ENCODE measurements at regions of chr19 and their contacts with region 1.

Region 1: DNA sequence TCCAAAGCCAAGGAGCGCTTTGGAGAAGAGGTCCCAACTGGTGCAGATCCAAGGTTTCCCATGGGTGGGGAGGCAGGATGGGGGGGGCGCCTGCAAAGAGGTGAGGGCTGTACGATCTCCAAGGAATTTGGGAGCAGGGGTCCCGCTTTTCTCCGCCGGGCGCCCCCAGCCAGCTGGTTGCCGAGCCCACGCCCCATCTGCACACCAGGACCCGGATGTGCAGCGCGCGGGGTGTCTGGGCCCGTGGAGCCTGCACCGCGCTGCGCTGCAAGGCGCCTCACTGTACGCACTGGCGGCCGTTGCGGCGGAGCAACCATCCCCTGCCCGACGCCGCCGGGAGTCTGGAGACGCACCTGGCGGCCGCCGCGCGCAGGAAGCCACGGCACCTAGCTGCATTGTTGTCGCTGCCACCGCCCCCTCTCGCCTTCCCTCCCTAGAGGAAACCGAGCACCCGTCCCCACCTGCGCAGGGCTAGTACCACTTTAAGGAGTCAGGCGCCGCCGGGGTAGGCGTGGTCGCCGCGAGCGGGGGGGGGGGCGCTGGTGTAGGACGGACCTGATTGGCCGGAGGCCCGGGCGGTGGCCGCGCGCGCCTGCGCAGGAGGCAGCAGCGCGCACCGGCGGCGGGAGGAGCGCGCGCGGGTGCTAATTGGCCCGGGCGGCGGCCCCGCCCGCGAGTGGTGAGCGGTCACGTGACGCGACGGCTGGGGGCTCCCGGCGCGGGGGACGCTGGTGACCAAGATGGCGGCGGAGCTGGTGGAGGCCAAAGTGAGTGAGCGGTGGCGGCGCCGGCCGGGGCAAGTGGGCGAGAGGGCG is at the start of gene PIAS4:
- DNase-seq: peak; percentile 98
- H3K4me3 Mint-ChIP-seq: peak within 1 kb of the TSS; percentile 90
- H3K27ac Mint-ChIP-seq: peak within 1 kb of the TSS; percentile 90
- H3K4me1 Mint-ChIP-seq: peaks cover 16% of the 10 kb centered on the region
- H3K27me3 Mint-ChIP-seq: no peaks in the 10 kb centered on the region
- total RNA-seq, gene PIAS4: 32.2 and 33.2 TPM in 2 replicates

Region 2: DNA sequence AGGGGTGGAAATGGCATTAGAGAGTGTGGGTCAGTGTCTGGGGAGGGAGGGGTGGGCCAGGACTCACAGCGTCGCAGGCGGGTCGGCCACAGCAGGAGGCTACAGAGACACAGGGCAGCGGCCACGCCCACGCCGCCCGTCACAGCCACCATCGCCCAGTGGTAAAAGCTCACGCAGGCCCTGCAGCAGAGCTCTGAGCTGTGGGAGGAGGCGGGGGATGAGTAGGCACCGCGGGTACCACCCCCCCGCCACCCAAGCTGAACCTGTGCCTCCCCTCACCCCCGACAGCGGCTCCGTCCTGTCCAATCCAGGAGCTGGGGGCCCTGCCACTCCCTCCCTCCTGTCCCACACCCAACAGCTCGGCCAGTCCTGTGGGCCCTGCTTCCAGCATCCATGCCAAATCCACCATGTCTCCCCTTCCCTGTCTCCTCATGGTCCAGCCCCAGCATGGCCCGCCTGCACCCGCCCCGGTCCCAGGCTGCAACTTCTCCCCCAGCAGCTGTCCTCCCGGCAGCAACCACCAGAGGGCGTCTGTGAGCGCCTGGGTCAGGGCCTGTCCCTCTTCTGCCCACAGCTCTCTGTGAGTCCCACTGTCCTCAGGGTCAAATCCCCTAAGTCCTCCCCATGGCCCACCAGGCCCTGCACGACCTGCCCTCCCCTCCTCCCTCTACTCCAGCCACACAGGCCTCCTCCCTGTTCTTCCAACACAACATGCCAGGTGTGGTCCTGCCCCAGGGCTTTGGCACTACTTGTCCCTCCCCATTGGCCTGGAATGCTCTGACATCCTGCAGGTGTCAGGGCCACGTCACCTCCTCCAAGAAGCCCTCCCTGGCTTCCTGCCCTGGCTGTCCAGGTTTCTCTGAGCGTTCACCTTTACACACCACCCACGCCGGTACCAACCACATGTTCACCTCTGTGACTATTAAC is 462.2 kb before region 1 on chr19:
- intact Hi-C with region 1: no loop called
- DNase-seq: peak; percentile 95
- H3K4me3 Mint-ChIP-seq: no peak overlapping the region
- H3K27ac Mint-ChIP-seq: no peak overlapping the region
- H3K4me1 Mint-ChIP-seq: peaks cover 8% of the 10 kb centered on the region
- H3K27me3 Mint-ChIP-seq: no peaks in the 10 kb centered on the region

Region 3: GRCh38 chr19:3721131-3721886 is 285.9 kb before region 1 on chr19:
- intact Hi-C with region 1: no loop called
- DNase-seq: peak; percentile 96
- H3K4me3 Mint-ChIP-seq: peak overlapping the region; percentile 54
- H3K27ac Mint-ChIP-seq: no peak overlapping the region
- H3K4me1 Mint-ChIP-seq: peaks cover 4% of the 10 kb centered on the region
- H3K27me3 Mint-ChIP-seq: peaks cover 32% of the 10 kb centered on the region

Region 4: DNA sequence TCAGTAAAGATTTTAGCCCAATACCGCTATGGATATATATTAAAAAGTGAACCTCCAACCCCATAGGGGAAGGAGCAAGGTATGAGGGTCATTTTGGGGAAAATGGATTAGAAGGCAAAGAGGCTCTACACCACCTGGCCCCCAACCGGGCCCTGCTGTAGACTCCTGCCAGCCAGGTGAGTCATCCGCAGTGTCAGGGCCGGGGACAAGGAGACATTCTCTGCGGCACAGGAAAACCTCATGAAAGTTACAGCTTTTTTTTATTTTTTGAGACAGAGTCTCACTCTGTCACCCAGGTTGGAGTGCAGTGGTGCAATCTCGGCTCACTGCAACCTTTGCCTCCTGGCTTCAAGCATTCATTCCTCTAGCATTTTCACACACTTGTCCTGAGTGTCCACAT is 170.3 kb before region 1 on chr19:
- intact Hi-C with region 1: no loop called
- DNase-seq: no peak
- H3K4me3 Mint-ChIP-seq: no peak overlapping the region
- H3K27ac Mint-ChIP-seq: no peak overlapping the region
- H3K4me1 Mint-ChIP-seq: no peaks in the 10 kb centered on the region
- H3K27me3 Mint-ChIP-seq: no peaks in the 10 kb centered on the region

Region 5: GRCh38 chr19:4075373-4075772 is 68.1 kb after region 1 on chr19:
- intact Hi-C with region 1: no loop called
- DNase-seq: peak; percentile 76
- H3K4me3 Mint-ChIP-seq: peak overlapping the region; percentile 48
- H3K27ac Mint-ChIP-seq: peak overlapping the region; percentile 86
- H3K4me1 Mint-ChIP-seq: peaks cover 33% of the 10 kb centered on the region
- H3K27me3 Mint-ChIP-seq: no peaks in the 10 kb centered on the region

Region 6: GRCh38 chr19:4115050-4115817 is 108.0 kb after region 1 on chr19:
- intact Hi-C with region 1: loop called (anchors 10 kb)
- DNase-seq: peak; percentile 90
- H3K4me3 Mint-ChIP-seq: peak overlapping the region; percentile 60
- H3K27ac Mint-ChIP-seq: peak overlapping the region; percentile 65
- H3K4me1 Mint-ChIP-seq: peaks cover 23% of the 10 kb centered on the region
- H3K27me3 Mint-ChIP-seq: no peaks in the 10 kb centered on the region

Region 7: GRCh38 chr19:4182084-4182810 is 175.0 kb after region 1 on chr19 and contains the starts of genes ANKRD24 and SIRT6:
- intact Hi-C with region 1: loop called (anchors 1 kb)
- DNase-seq: peak; percentile 99
- H3K4me3 Mint-ChIP-seq: peak within 1 kb of the TSS; percentile 99
- H3K27ac Mint-ChIP-seq: peak within 1 kb of the TSS; percentile 96
- H3K4me1 Mint-ChIP-seq: peaks cover 40% of the 10 kb centered on the region
- H3K27me3 Mint-ChIP-seq: peaks cover 2% of the 10 kb centered on the region
- total RNA-seq, gene ANKRD24: 0.50 and 0.72 TPM in 2 replicates
- total RNA-seq, gene SIRT6: 39.8 and 48.0 TPM in 2 replicates